Activated naive CD4-positive, alpha-beta T cell treated with anti-CD3 and anti-CD28 coated beads for 36 hours (primary cell): ENCODE measurements at regions of chr4 and their contacts with region 1.

Region 1: DNA sequence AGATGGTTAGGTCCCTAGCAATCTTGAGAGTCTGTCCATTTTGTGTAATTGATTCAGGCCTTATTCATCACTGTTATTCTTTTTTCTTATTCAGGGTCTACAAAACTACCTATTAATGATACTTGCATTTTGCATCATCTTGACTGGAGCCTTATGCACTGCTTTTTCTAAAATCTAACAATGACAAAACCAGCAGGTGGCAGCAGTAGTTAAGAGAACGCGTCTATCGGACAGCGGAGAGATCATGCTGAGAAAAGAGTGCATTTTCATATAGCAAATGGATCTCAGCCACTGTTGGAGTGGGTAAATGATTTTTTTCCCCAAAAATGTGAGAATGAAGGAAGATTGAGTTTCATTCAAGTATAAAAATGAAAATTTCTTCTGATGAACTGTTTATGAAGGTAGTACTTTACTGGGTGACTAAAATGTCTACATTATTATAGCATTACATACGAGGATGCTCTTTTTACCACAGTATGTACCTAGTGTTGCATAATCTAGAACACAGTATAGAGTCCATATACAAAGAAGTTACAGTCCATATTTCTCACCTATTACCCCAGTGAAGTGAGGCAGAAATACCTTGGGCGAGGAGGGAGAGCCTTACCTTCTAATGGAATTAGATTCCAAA is 43.2 kb downstream of the TMEM144 start:
- DNase-seq: peak; percentile 76
- H3K4me3 Mint-ChIP-seq: no peak overlapping the region
- H3K27ac Mint-ChIP-seq: no peak overlapping the region
- H3K4me1 Mint-ChIP-seq: peaks cover 7% of the 10 kb centered on the region
- H3K27me3 Mint-ChIP-seq: peaks cover 18% of the 10 kb centered on the region

Region 2: GRCh38 chr4:157727163-157727562 is 526.3 kb before region 1 on chr4:
- CTCF ChIA-PET with region 1: no interaction called
- intact Hi-C with region 1: no loop called
- DNase-seq: no peak
- H3K4me3 Mint-ChIP-seq: no peak overlapping the region
- H3K27ac Mint-ChIP-seq: no peak overlapping the region
- H3K4me1 Mint-ChIP-seq: no peaks in the 10 kb centered on the region
- H3K27me3 Mint-ChIP-seq: no peaks in the 10 kb centered on the region

Region 3: DNA sequence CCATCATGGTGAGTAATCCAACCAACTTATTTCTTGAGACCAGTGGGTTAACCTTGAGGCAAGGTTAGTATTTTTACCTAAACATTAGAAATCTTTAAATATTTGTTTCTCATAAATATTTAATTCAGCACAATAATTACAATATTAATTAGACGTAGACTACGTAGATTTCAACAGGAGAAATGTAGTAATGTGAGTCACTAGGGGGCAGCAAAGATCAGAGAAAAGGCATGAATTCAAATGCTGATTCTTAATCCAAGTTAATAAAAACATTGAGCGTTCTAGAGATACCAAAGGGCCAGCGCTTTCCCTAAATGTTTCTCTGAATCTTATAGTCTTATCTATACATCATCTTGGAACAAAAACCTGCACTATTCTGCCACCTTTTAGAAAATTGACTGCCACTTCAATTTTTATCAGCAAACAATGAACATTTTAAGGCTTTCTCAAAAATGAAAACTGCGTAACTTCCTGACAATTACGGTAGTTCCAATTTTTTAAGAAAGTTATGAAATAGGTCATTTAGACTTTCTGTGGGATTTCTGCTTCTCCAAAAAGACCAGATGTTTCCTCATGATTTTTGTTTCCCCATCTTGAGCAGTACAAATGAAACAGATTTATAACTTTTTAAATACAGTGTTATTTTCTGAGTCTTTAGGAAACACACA is 261.3 kb before region 1 on chr4:
- CTCF ChIA-PET with region 1: interaction called, 4 read pairs
- intact Hi-C with region 1: loop called (anchors 1 kb)
- DNase-seq: peak; percentile 32
- H3K4me3 Mint-ChIP-seq: no peak overlapping the region
- H3K27ac Mint-ChIP-seq: no peak overlapping the region
- H3K4me1 Mint-ChIP-seq: no peaks in the 10 kb centered on the region
- H3K27me3 Mint-ChIP-seq: no peaks in the 10 kb centered on the region

Region 4: GRCh38 chr4:158172261-158173258 is 80.9 kb before region 1 on chr4 and contains the start of gene GASK1B:
- CTCF ChIA-PET with region 1: no interaction called
- intact Hi-C with region 1: loop called (anchors 5 kb)
- DNase-seq: peak; percentile 40
- H3K4me3 Mint-ChIP-seq: no peak within 1 kb of the TSS
- H3K27ac Mint-ChIP-seq: no peak within 1 kb of the TSS
- H3K4me1 Mint-ChIP-seq: peaks cover 5% of the 10 kb centered on the region
- H3K27me3 Mint-ChIP-seq: peaks cover 27% of the 10 kb centered on the region
- total RNA-seq, gene GASK1B: not detected

Region 5: DNA sequence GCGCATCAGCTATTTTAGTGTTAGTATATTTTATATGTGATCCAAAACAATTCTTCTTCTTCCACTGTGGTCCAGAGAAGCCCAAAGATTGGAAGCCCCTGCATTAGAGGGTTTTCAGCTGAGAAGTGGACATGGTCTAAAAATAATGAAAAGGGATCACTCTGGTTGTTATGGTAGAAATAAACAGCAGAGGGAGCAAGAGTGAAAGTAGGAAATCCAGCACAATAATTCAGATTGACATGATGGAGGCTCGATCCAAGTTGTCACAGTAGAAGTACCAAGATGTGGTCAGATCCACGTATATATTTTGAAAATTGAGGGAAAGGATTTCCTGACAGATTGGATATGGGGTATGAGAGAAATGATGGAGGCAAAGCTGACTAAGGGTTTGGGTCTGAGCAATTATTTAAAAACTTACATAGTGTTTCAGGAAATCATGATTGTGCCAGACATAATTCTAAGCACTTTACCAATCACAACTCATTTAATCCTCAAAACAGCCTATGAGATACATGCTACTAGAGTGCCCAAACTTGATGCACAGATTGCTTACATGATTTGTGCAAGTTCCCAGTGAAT is 60.2 kb before region 1 on chr4:
- CTCF ChIA-PET with region 1: interaction called, 12 read pairs
- intact Hi-C with region 1: loop called (anchors 1 kb)
- DNase-seq: no peak
- H3K4me3 Mint-ChIP-seq: no peak overlapping the region
- H3K27ac Mint-ChIP-seq: no peak overlapping the region
- H3K4me1 Mint-ChIP-seq: no peaks in the 10 kb centered on the region
- H3K27me3 Mint-ChIP-seq: peaks cover 10% of the 10 kb centered on the region

Region 6: DNA sequence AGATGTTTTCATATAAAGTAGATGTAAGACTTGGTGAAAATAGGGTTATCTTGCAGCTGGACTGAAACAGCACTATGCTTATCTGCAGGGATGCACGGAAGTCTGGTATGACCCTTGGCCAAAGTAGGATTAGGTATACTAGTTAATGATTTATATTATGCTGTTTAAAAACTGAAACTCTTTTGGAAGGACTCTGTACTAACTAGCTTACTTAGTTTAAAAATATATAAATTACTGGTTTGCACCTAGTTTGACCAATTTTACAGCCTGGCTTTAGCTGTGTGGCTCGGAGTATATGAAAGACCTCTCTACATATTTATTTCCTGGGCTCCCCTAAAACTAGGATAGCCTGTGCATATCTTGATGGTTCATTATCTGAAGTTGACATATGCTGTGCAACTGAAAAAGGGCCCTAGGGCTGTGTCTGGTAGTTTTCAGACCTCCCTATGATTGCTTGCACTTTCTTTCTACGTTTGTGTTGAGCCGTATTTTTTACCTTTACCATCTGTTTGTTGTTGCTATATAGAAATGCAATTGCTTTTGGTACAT is 46.1 kb after region 1 on chr4:
- CTCF ChIA-PET with region 1: no interaction called
- intact Hi-C with region 1: no loop called
- DNase-seq: no peak
- H3K4me3 Mint-ChIP-seq: no peak overlapping the region
- H3K27ac Mint-ChIP-seq: no peak overlapping the region
- H3K4me1 Mint-ChIP-seq: no peaks in the 10 kb centered on the region
- H3K27me3 Mint-ChIP-seq: no peaks in the 10 kb centered on the region

Region 7: GRCh38 chr4:158578476-158578875 is 325.0 kb after region 1 on chr4:
- CTCF ChIA-PET with region 1: no interaction called
- intact Hi-C with region 1: loop called (anchors 2 kb)
- DNase-seq: no peak
- H3K4me3 Mint-ChIP-seq: no peak overlapping the region
- H3K27ac Mint-ChIP-seq: no peak overlapping the region
- H3K4me1 Mint-ChIP-seq: no peaks in the 10 kb centered on the region
- H3K27me3 Mint-ChIP-seq: peaks cover 2% of the 10 kb centered on the region

Region 8: DNA sequence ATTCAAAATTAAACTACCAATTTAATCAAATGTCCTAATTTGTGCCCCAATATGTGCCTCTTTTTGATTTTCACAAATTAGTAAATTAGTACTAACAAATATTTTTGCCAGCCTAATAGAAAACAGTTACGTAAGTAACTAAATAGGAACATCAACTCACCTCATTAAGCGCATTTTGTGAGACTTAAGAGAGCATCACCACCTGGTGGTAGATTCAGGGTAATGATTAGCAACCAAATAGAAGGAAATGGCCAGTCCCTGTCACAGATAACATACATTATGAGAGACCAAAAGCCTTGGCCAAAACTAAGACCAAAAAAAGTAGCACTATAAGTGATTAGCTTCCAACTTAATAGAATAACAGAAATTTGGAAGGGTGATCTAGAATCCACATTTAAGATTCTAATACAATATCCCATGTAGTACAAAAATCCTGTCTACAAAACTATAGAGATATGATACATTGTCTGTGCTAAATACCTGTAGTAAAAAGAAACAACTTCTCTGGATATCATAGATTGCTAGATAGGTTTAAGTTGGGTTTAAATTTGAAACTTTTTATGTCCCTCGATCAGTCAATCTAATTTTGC is 371.5 kb after region 1 on chr4:
- CTCF ChIA-PET with region 1: interaction called, 3 read pairs
- intact Hi-C with region 1: loop called (anchors 1 kb)
- DNase-seq: peak; percentile 12
- H3K4me3 Mint-ChIP-seq: no peak overlapping the region
- H3K27ac Mint-ChIP-seq: no peak overlapping the region
- H3K4me1 Mint-ChIP-seq: no peaks in the 10 kb centered on the region
- H3K27me3 Mint-ChIP-seq: peaks cover 20% of the 10 kb centered on the region